Heart right ventricle (tissue), 16 donors: ENCODE measurements at regions of chr16 and their contacts with region 1.

Region 1: GRCh38 chr16:2720719-2721633 is 952 bp upstream of the PRSS27 start:
- DNase-seq: peak; percentile 77 to 85
- ATAC-seq: peak; percentile 82 to 94 (median 84)
- H3K4me3 ChIP-seq: peak overlapping the region; percentile 57 to 83 (median 72)
- H3K27ac ChIP-seq: peak overlapping the region; percentile 25 to 93 (median 79)
- H3K4me1 ChIP-seq: peaks cover 3 to 30% (median 22%) of the 10 kb centered on the region in 9 donors
- H3K27me3 ChIP-seq: peaks cover 0 to 14% (median 0%) of the 10 kb centered on the region in 7 donors
- CTCF ChIP-seq: peak; percentile 55 to 93 (median 78)

Region 2: DNA sequence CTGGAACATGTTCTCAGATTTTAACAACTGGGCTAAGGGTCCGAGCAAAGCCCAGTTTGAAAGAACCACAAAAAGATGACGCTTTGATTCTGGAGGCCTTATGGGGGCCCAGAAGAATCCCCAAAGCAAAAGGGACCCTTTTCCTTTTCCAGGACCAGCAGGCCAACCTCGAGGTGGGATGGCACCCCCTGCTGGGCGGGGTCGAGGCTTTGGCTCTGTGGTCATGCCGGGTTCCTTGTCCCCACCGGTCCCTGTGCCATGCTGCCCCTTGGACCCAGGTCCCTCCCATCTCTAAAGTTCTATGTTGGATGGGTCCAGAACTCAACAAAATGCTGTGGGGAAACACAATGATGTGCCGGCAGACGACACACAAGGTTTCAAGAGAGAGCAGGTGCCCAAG is 1156.7 kb before region 1 on chr16:
- intact Hi-C with region 1: no loop called
- DNase-seq: no peak
- ATAC-seq: no peak
- H3K4me3 ChIP-seq: no peak overlapping the region
- H3K27ac ChIP-seq: no peak overlapping the region
- H3K4me1 ChIP-seq: peaks cover 0 to 24% (median 5%) of the 10 kb centered on the region in 9 donors
- H3K27me3 ChIP-seq: no peaks in the 10 kb centered on the region
- CTCF ChIP-seq: peak in 8 of 9 donors; percentile 20 to 56 (median 48)

Region 3: DNA sequence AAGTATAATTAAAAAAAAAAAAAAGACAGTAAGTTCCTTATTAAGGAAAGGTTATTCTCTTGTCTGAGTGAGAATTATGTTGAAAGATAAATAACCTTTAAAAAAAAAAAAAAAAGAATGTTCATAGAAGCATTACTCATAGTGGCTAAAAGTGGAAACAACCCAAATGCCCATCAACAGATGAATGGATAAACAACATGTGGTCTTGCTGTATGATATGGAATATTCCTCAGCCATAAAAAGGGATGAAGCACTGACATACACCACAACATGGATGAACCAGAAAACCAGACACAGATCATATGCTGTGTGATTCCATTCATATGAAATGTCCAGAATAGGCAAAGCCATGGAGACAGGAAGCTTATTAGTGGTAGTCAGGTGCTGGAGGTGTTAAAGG is 300.9 kb before region 1 on chr16:
- intact Hi-C with region 1: no loop called
- DNase-seq: no peak
- ATAC-seq: no peak
- H3K4me3 ChIP-seq: no peak overlapping the region
- H3K27ac ChIP-seq: no peak overlapping the region
- H3K4me1 ChIP-seq: peaks cover 0 to 5% (median 0%) of the 10 kb centered on the region in 9 donors
- H3K27me3 ChIP-seq: peaks cover 0 to 19% (median 15%) of the 10 kb centered on the region in 7 donors
- CTCF ChIP-seq: no peak

Region 4: GRCh38 chr16:2663553-2664546 is 57.1 kb before region 1 on chr16:
- intact Hi-C with region 1: no loop called
- DNase-seq: no peak
- ATAC-seq: peak in 1 of 8 donors; percentile 66
- H3K4me3 ChIP-seq: no peak overlapping the region
- H3K27ac ChIP-seq: peak overlapping the region in 2 of 10 donors; percentile 40 to 58
- H3K4me1 ChIP-seq: peaks cover 0 to 10% (median 0%) of the 10 kb centered on the region in 9 donors
- H3K27me3 ChIP-seq: no peaks in the 10 kb centered on the region
- CTCF ChIP-seq: no peak

Region 5: DNA sequence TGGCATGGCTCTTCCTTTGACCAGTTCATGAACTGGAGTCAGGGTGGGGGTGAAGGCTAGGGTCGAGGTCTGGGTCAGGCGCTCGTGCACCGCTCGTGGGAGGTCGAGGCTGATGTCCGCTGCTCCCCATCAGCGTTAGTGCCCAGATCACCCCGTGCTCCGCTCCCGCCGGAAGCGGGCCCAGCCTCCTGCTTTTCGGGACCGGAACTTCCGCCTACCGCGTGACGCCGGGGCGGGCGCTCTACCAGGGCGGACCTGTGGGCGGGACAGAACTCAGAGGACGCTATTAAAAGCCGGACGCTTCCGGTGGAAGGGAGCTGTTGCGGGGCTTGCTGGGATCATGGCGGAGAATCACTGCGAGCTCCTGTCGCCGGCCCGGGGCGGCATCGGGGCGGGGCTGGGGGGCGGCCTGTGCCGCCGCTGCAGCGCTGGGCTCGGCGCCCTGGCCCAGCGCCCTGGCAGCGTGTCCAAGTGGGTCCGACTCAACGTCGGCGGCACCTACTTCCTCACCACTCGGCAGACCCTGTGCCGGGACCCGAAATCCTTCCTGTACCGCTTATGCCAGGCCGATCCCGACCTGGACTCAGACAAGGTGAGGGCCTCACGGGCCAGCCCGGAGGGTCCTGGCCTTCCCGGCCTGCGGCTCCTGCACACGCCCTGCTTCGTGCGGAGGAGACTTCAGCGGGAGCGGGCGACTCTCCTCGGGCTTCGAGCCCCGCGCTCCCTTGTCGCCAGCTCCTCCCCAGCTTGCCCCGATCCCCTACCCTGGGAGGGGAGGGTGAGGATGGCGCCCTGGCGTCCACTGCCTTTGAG is 38.6 kb before region 1 on chr16 and contains the start of gene KCTD5:
- intact Hi-C with region 1: loop called in 3 of 10 experiments (anchors 2 to 5 kb)
- DNase-seq: peak; percentile 95 to 97
- ATAC-seq: peak; percentile 93 to 98 (median 97)
- H3K4me3 ChIP-seq: peak within 1 kb of the TSS; percentile 73 to 99 (median 92)
- H3K27ac ChIP-seq: peak within 1 kb of the TSS; percentile 71 to 96 (median 90)
- H3K4me1 ChIP-seq: peaks cover 0 to 33% (median 27%) of the 10 kb centered on the region in 9 donors
- H3K27me3 ChIP-seq: no peaks in the 10 kb centered on the region
- CTCF ChIP-seq: peak in 1 of 9 donors; percentile 5
- total RNA-seq, gene KCTD5: 8.5 to 22.4 (median 11.7) TPM

Region 6: GRCh38 chr16:2752035-2752849 is 31.3 kb after region 1 on chr16 and contains the start of gene SRRM2:
- intact Hi-C with region 1: loop called in 1 of 10 experiments (anchors 1 kb)
- DNase-seq: peak; percentile 94 to 96
- ATAC-seq: peak; percentile 94 to 97 (median 96)
- H3K4me3 ChIP-seq: peak within 1 kb of the TSS; percentile 68 to 94 (median 82)
- H3K27ac ChIP-seq: peak within 1 kb of the TSS; percentile 94 to 100 (median 100)
- H3K4me1 ChIP-seq: peaks cover 12 to 49% (median 44%) of the 10 kb centered on the region in 9 donors
- H3K27me3 ChIP-seq: no peaks in the 10 kb centered on the region
- CTCF ChIP-seq: peak in 2 of 9 donors; percentile 10 to 23
- total RNA-seq, gene SRRM2: 228 to 392 (median 261) TPM